ENCODE measurements at regions of chr14 and their contacts with region 1.

Region 1: DNA sequence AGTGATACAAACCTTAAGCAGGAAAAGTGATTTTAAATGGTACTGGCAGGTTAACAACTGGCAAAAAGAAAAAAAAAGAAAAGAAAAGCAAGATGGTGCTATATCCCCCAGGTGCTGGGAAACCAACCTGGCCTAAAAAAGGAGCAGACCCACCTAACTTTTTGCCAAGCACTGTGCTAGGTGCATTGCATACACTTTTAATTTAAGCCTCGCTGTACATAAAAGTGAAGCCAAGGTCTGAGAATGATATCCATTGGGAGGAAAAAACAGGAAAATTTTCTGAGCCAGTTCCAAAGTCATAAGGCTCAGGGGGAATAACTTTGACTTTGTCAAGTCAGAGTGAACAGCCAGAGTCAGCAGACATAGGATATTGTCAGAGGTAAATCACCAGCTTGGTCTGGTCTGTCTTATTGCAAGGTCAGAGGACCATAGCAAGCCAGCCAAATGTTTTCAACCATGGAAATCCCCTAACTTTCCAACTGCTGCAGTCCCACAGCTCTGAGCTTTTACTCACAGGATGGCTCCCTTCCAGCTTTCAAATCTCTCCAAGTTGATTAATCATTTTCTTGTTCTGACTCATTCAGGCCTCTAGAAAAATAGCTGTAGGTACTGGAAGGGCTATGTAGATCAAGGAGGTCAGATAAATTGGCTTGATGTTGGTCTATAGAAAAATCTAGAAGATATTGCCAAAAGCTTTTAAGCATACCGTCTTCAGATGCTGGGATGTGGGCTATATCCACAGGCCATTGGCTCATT is 412.9 kb downstream of the RAD51B start:
- DNase-seq: peak; percentile 99
- ATAC-seq: peak; percentile 97
- H3K4me3 ChIP-seq: no peak overlapping the region
- H3K27ac ChIP-seq: peak overlapping the region; percentile 84
- H3K4me1 ChIP-seq: peaks cover 19% of the 10 kb centered on the region
- H3K27me3 ChIP-seq: no peaks in the 10 kb centered on the region
- CTCF ChIP-seq: no peak
- EP300 ChIP-seq: peak; percentile 84 to 87
- POLR2A ChIP-seq: no peak
- RAD21 ChIP-seq: no peak

Region 2: GRCh38 chr14:68172627-68173026 is 59.9 kb before region 1 on chr14:
- CTCF ChIA-PET with region 1: no interaction called
- POLR2A ChIA-PET with region 1: interaction called, 4 read pairs
- RAD21 ChIA-PET with region 1: interaction called, 11 read pairs
- SMC1A ChIA-PET with region 1: interaction called, 13 read pairs
- in situ Hi-C with region 1: no loop called
- intact Hi-C with region 1: no loop called
- DNase-seq: peak; percentile 43
- ATAC-seq: peak; percentile 94
- H3K4me3 ChIP-seq: no peak overlapping the region
- H3K27ac ChIP-seq: no peak overlapping the region
- H3K4me1 ChIP-seq: no peaks in the 10 kb centered on the region
- H3K27me3 ChIP-seq: no peaks in the 10 kb centered on the region
- CTCF ChIP-seq: no peak
- EP300 ChIP-seq: no peak
- POLR2A ChIP-seq: no peak
- RAD21 ChIP-seq: no peak

Region 3: GRCh38 chr14:68181519-68182326 is 50.8 kb before region 1 on chr14:
- CTCF ChIA-PET with region 1: no interaction called
- POLR2A ChIA-PET with region 1: no interaction called
- RAD21 ChIA-PET with region 1: no interaction called
- SMC1A ChIA-PET with region 1: interaction called, 4 read pairs
- in situ Hi-C with region 1: no loop called
- intact Hi-C with region 1: loop called (anchors 2 kb)
- DNase-seq: peak; percentile 48
- ATAC-seq: peak; percentile 79
- H3K4me3 ChIP-seq: peak overlapping the region; percentile 47
- H3K27ac ChIP-seq: peak overlapping the region; percentile 56
- H3K4me1 ChIP-seq: peaks cover 21% of the 10 kb centered on the region
- H3K27me3 ChIP-seq: no peaks in the 10 kb centered on the region
- CTCF ChIP-seq: no peak
- EP300 ChIP-seq: no peak
- POLR2A ChIP-seq: no peak
- RAD21 ChIP-seq: no peak

Region 4: GRCh38 chr14:68203871-68204270 is 28.6 kb before region 1 on chr14:
- CTCF ChIA-PET with region 1: no interaction called
- POLR2A ChIA-PET with region 1: interaction called, 3 read pairs
- RAD21 ChIA-PET with region 1: interaction called, 4 read pairs
- SMC1A ChIA-PET with region 1: interaction called, 12 read pairs
- in situ Hi-C with region 1: no loop called
- intact Hi-C with region 1: no loop called
- DNase-seq: no peak
- ATAC-seq: no peak
- H3K4me3 ChIP-seq: no peak overlapping the region
- H3K27ac ChIP-seq: no peak overlapping the region
- H3K4me1 ChIP-seq: peaks cover 6% of the 10 kb centered on the region
- H3K27me3 ChIP-seq: no peaks in the 10 kb centered on the region
- CTCF ChIP-seq: no peak
- EP300 ChIP-seq: no peak
- POLR2A ChIP-seq: no peak
- RAD21 ChIP-seq: no peak